SK-N-SH (cell line): ENCODE measurements at regions of chr11 and their contacts with region 1.

Region 1: GRCh38 chr11:777288-778255 is at the start of gene GATD1:
- DNase-seq: peak; percentile 100
- H3K4me3 ChIP-seq: peak within 1 kb of the TSS; percentile 85 to 87
- H3K27ac ChIP-seq: peak within 1 kb of the TSS; percentile 22 to 83; a peak in 3 of 4 replicates
- H3K4me1 ChIP-seq: peaks cover 11 to 19% of the 10 kb centered on the region in 2 experiments; a peak in 2 of 4 replicates
- H3K27me3 ChIP-seq: no peaks in the 10 kb centered on the region
- CTCF ChIP-seq: no peak
- EP300 ChIP-seq: no peak
- RAD21 ChIP-seq: no peak
- polyA plus RNA-seq, gene GATD1: 72.9 and 86.2 TPM in 2 replicates

Region 2: DNA sequence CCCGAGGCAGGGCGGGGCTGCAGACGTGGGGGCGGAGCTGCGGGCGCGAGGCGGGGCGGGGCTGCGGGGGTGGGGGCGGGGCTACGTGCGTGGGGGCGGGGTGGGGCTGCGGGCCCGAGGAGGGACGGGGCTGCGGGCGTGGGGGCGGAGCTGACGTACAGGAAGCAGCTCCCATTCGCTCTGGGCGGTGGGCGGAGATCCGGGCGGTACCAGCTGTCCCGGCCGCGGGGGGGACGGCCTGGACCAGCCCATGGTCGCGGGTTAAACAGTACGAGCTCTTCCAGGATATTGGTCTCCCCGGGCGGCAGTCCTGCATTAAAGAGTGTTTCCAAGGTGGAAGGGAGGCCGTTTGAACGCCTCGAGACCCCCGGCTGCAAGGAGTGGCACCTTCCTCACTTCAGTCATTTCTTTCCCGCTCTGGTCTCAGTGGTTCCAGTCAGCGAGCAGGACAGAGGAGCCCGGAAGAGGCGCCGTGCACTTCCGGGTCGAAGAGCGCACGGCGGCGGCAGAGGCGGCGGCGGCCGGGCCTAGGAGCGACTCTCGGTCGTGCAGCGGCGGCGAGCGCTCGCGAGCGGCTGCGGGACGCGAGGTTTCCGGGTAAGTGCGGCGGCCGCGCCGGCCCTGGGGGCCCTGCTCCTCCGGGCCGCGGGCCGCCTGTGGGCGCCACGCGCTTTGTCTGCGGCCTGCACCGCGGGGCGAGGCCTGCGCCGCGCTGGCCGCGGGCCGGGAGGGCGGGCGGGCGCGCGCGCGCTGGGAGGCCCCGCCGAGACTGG is 201.4 kb before region 1 on chr11 and contains the start of gene PHRF1:
- CTCF ChIA-PET with region 1: no interaction called
- POLR2A ChIA-PET with region 1: no interaction called
- DNase-seq: peak; percentile 100
- H3K4me3 ChIP-seq: peak within 1 kb of the TSS; percentile 93 to 98
- H3K27ac ChIP-seq: peak within 1 kb of the TSS; percentile 77 to 98
- H3K4me1 ChIP-seq: peaks cover 4 to 29% of the 10 kb centered on the region in 2 experiments; a peak in 3 of 4 replicates
- H3K27me3 ChIP-seq: no peaks in the 10 kb centered on the region
- CTCF ChIP-seq: no peak
- EP300 ChIP-seq: peak in 1 of 2 experiments; percentile 49; a peak in 1 of 4 replicates
- RAD21 ChIP-seq: no peak
- polyA plus RNA-seq, gene PHRF1: 18.8 and 22.7 TPM in 2 replicates

Region 3: GRCh38 chr11:789943-790342 is 12.4 kb after region 1 on chr11 and contains the start of gene CEND1:
- CTCF ChIA-PET with region 1: interaction called, 43 read pairs
- POLR2A ChIA-PET with region 1: interaction called, 18 read pairs
- DNase-seq: peak; percentile 95
- H3K4me3 ChIP-seq: peak within 1 kb of the TSS; percentile 58 to 67
- H3K27ac ChIP-seq: peak within 1 kb of the TSS; percentile 41 to 66; a peak in 3 of 4 replicates
- H3K4me1 ChIP-seq: peaks cover 0 to 27% of the 10 kb centered on the region in 2 experiments; a peak in 1 of 4 replicates
- H3K27me3 ChIP-seq: no peaks in the 10 kb centered on the region
- CTCF ChIP-seq: no peak
- EP300 ChIP-seq: no peak
- RAD21 ChIP-seq: no peak
- polyA plus RNA-seq, gene CEND1: 2.9 and 3.6 TPM in 2 replicates